Sigmoid colon (tissue), 7 donors: ENCODE measurements at regions of chr21 and their contacts with region 1.

Region 1: DNA sequence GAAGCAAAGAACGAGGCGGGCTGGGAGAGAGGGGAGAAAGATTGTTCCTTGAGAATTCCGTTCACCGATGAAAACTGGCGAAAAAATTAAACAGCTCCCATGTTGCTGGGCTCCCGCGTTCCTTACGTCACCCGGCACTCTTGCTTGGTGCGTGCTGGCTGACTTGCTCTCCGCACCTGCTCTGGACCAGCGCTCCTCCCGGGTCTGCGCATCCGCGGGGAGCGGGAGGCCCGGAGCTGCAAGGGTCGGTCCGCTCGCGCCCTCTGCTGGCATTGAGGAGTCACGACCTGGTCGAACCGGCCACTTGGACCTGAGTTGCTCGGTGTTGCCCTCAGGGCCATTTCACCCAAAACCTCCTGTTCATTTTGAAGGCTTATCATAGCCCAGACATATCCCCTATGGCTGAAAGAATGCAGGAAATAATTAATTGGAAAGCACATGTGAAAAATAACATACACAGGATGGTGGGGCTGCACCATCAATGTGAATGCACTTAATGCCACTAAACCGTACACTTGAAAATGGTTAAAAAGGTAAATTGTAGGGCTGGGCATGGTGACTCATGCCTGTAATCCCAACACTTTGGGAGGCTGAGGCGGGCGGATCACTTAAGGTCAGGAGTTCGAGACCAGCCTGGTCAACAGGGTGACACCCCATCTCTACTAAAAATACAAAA is 98.9 kb upstream of the BACE2 start:
- DNase-seq: peak; percentile 88
- H3K4me3 ChIP-seq: peak overlapping the region in 3 of 4 donors; percentile 2 to 26 (median 25)
- H3K27ac ChIP-seq: no peak overlapping the region
- H3K4me1 ChIP-seq: peaks cover 0 to 7% (median 2%) of the 10 kb centered on the region in 4 donors
- H3K27me3 ChIP-seq: peaks cover 0 to 20% (median 4%) of the 10 kb centered on the region in 3 donors
- CTCF ChIP-seq: peak; percentile 51 to 86 (median 73)
- EP300 ChIP-seq: no peak
- POLR2A ChIP-seq: no peak

Region 2: DNA sequence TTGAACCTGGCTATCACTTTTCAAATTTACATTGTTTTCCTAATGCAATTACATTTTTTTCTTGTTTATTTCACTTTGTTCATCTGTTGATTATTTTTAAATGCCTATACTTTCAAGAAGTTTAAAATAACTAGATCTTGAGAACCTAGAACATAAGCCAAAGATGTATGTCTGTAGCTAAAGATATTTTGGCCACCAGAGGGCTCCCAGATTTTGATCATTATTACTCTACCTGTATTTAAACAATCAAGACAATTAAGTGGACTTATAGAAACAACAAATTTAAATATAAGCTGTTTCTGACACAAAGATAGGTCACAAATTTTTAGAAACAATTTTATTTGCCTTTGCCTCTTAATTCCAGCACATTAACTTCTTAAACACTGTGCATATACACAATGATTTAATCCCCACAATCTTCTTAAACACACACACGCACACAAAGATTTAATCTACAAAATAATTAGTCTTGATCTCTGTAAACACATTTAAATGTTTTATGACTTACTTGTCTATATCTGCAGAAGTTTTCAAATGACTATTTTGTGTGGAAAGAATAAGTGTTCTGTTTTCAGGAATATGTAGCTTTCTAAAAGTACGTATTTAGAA is 602.1 kb before region 1 on chr21:
- intact Hi-C with region 1: loop called (anchors 2 kb)
- DNase-seq: no peak
- H3K4me3 ChIP-seq: no peak overlapping the region
- H3K27ac ChIP-seq: no peak overlapping the region
- H3K4me1 ChIP-seq: no peaks in the 10 kb centered on the region
- H3K27me3 ChIP-seq: no peaks in the 10 kb centered on the region
- CTCF ChIP-seq: peak in 3 of 4 experiments; percentile 24 to 44 (median 27)
- EP300 ChIP-seq: no peak
- POLR2A ChIP-seq: no peak

Region 3: GRCh38 chr21:40841524-40842202 is 227.4 kb before region 1 on chr21:
- intact Hi-C with region 1: loop called (anchors 10 kb)
- DNase-seq: no peak
- H3K4me3 ChIP-seq: peak overlapping the region in 3 of 4 donors; percentile 24 to 44 (median 28)
- H3K27ac ChIP-seq: no peak overlapping the region
- H3K4me1 ChIP-seq: peaks cover 0 to 25% (median 8%) of the 10 kb centered on the region in 4 donors
- H3K27me3 ChIP-seq: peaks cover 0 to 39% (median 19%) of the 10 kb centered on the region in 3 donors
- CTCF ChIP-seq: peak in 1 of 4 experiments; percentile 33
- EP300 ChIP-seq: no peak
- POLR2A ChIP-seq: no peak

Region 4: GRCh38 chr21:40976198-40977109 is 92.7 kb before region 1 on chr21:
- intact Hi-C with region 1: no loop called
- DNase-seq: no peak
- H3K4me3 ChIP-seq: no peak overlapping the region
- H3K27ac ChIP-seq: no peak overlapping the region
- H3K4me1 ChIP-seq: no peaks in the 10 kb centered on the region
- H3K27me3 ChIP-seq: no peaks in the 10 kb centered on the region
- CTCF ChIP-seq: no peak
- EP300 ChIP-seq: no peak
- POLR2A ChIP-seq: no peak

Region 5: DNA sequence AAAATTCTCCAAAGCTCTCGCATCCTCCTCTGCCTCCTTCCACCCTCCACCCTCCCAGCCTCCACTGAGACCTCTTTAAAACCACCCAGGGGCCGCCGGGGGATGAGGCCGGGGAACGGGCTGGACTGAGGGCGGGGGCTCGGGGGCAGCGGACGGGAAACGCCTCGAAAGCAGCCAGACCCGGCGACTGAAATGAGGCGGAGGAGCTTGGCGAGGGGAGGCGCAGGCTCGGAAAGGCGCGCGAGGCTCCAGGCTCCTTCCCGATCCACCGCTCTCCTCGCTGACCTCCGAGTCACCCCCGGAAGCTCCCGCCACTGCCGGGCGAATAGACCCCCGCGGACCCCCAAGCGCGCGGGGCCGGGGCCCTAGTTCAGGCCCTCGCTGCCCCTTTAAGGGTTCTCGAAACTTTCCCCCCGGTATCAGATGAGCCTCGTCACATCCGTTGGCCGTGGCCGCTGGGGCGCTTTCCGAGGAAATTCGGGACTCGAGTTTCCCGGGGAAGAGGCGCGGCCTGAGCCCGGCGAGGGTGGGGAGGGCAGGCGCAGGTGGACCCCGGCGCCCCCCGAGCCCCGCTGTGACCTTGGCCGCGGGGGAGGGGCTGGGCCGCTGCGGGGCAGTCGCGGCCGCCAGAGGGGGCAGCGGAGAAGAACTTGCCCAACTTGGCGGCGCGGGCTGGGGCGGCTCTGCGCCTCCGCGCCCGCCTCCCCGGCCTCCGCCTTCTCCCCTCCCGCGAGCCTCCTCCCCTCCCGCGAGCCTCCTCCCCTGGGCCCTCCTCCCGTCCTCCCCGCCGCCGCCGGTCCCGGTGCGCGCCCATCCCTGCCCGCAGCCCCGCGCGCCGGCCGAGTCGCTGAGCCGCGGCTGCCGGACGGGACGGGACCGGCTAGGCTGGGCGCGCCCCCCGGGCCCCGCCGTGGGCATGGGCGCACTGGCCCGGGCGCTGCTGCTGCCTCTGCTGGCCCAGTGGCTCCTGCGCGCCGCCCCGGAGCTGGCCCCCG is 98.5 kb after region 1 on chr21 and contains the start of gene BACE2:
- intact Hi-C with region 1: no loop called
- DNase-seq: peak; percentile 93
- H3K4me3 ChIP-seq: peak within 1 kb of the TSS; percentile 64 to 95 (median 84)
- H3K27ac ChIP-seq: peak within 1 kb of the TSS; percentile 93 to 98 (median 95)
- H3K4me1 ChIP-seq: peaks cover 0 to 30% (median 27%) of the 10 kb centered on the region in 4 donors
- H3K27me3 ChIP-seq: no peaks in the 10 kb centered on the region
- CTCF ChIP-seq: peak in 3 of 4 experiments; percentile 31 to 61 (median 41)
- EP300 ChIP-seq: no peak
- POLR2A ChIP-seq: no peak
- total RNA-seq, gene BACE2: 52.1 to 204 (median 53.1) TPM